ENCODE measurements at regions of chr15 and their contacts with region 1.

Region 1: GRCh38 chr15:52805351-52806283 is 15.5 kb upstream of the ONECUT1 start:
- DNase-seq: peak in 1 of 2 experiments; percentile 78
- H3K4me3 ChIP-seq: peak overlapping the region; percentile 20 to 69 (median 42)
- H3K27ac ChIP-seq: peak overlapping the region; percentile 70; the same call in 1 of the 2 replicates
- H3K4me1 ChIP-seq: peaks cover 11 to 30% (median 19%) of the 10 kb centered on the region in 4 experiments
- H3K27me3 ChIP-seq: peaks cover 10 to 39% (median 31%) of the 10 kb centered on the region in 4 experiments; a peak in 6 of 7 replicates
- CTCF ChIP-seq: peak in 2 of 3 experiments; percentile 27 to 70; a peak in 3 of 4 replicates
- EP300 ChIP-seq: no peak
- POLR2A ChIP-seq: peak in 1 of 2 experiments; percentile 51; a peak in 2 of 3 replicates
- RAD21 ChIP-seq: peak in 1 of 2 experiments; percentile 18; a peak in 2 of 4 replicates

Region 2: GRCh38 chr15:52709190-52709981 is 96.2 kb before region 1 on chr15:
- CTCF ChIA-PET with region 1: no interaction called
- POLR2A ChIA-PET with region 1: no interaction called
- DNase-seq: peak; percentile 49 to 84
- H3K4me3 ChIP-seq: peak overlapping the region; percentile 39 to 77 (median 52)
- H3K27ac ChIP-seq: no peak overlapping the region
- H3K4me1 ChIP-seq: peaks cover 0 to 8% (median 3%) of the 10 kb centered on the region in 4 experiments; a peak in 4 of 7 replicates
- H3K27me3 ChIP-seq: no peaks in the 10 kb centered on the region
- CTCF ChIP-seq: no peak
- EP300 ChIP-seq: no peak
- POLR2A ChIP-seq: no peak
- RAD21 ChIP-seq: no peak

Region 3: DNA sequence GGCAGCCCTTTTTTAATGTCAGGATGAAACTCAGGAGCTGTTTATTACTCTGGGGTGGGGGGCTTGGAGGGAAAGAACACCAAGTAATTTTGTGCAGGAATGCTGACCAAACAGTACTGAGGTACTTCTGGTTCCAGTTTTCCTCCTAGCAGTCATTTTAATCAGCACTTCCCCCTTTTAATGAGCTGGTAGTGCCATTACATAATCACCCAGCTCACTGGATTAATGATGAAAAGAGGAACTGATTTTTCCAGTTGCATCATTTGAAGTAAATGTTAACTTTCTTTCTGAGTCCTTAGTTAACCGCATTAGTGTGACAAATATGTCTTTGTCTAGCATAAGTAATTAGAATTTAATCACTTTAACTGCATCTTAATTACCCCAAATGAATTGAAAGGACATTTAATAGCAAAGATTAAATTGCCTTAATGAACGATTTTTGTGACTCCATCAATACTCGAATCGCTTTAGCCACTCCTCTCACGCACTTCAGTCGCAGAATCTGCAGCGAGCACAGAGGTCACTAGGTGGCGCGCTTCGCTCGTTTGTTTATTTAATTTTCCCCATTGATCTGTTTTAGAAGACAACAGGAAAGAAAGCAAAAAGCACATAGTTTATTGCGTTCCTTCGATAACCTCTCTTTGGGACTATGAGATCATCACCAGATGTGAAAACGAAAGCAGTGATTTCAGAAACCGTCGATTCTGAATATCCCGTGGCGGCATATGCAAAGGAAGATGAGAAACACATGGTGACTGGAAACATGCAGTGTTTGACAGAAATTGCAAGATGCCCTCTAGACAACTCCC is 25.2 kb before region 1 on chr15:
- CTCF ChIA-PET with region 1: interaction called, 182 read pairs
- POLR2A ChIA-PET with region 1: interaction called, 225 read pairs
- DNase-seq: peak in 1 of 2 experiments; percentile 88
- H3K4me3 ChIP-seq: no peak overlapping the region
- H3K27ac ChIP-seq: no peak overlapping the region
- H3K4me1 ChIP-seq: peaks cover 4 to 32% (median 8%) of the 10 kb centered on the region in 4 experiments; a peak in 6 of 7 replicates
- H3K27me3 ChIP-seq: peaks cover 14 to 36% (median 29%) of the 10 kb centered on the region in 4 experiments
- CTCF ChIP-seq: peak; percentile 73 to 88 (median 83)
- EP300 ChIP-seq: no peak
- POLR2A ChIP-seq: no peak
- RAD21 ChIP-seq: peak; percentile 85 to 90

Region 4: DNA sequence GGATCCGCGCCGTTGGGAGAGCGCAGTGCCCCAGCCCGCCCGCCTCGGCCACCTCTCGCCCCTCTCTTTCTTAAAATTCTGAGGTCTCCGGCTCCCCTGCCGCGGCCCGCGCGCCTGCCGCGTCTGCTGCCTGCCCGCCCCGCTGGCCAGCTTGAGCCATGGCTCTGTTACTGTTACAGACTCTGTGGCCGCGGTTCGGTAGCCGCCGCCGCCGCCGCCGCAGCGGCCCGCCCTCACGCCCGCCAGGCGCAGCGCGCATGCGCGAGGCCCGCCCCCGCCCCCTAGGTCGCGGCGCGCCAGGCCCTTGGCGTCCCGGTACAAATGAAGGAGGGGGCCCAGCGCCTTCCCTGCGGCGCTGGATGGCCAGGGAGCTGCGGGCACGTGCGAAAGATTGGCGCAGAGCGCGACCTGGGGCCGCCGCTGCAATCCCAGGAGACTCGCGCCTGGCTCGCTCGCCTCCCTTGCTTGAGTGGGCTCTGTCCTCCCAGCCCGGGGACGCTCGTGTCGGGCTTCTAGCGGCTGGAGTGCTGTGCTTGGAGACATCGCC is 15.4 kb before region 1 on chr15 and contains the start of gene ONECUT1:
- CTCF ChIA-PET with region 1: interaction called, 182 read pairs
- POLR2A ChIA-PET with region 1: interaction called, 225 read pairs
- DNase-seq: peak in 1 of 2 experiments; percentile 87
- H3K4me3 ChIP-seq: peak within 1 kb of the TSS; percentile 42 to 62 (median 46)
- H3K27ac ChIP-seq: no peak within 1 kb of the TSS
- H3K4me1 ChIP-seq: peaks cover 15 to 65% (median 52%) of the 10 kb centered on the region in 4 experiments
- H3K27me3 ChIP-seq: peaks cover 83 to 99% (median 96%) of the 10 kb centered on the region in 4 experiments
- CTCF ChIP-seq: no peak
- EP300 ChIP-seq: no peak
- POLR2A ChIP-seq: no peak
- RAD21 ChIP-seq: no peak
- total RNA-seq, gene ONECUT1: 6.1 and 6.4 TPM in 2 replicates

Region 5: GRCh38 chr15:52857937-52858781 is 52.5 kb after region 1 on chr15:
- CTCF ChIA-PET with region 1: interaction called, 11 read pairs
- POLR2A ChIA-PET with region 1: interaction called, 3 read pairs
- DNase-seq: no peak
- H3K4me3 ChIP-seq: peak overlapping the region in 1 of 4 experiments; percentile 5; a peak in 1 of 8 replicates
- H3K27ac ChIP-seq: no peak overlapping the region
- H3K4me1 ChIP-seq: peaks cover 0 to 16% (median 11%) of the 10 kb centered on the region in 4 experiments; a peak in 5 of 7 replicates
- H3K27me3 ChIP-seq: peaks cover 0 to 2% (median 0%) of the 10 kb centered on the region in 4 experiments; a peak in 1 of 7 replicates
- CTCF ChIP-seq: no peak
- EP300 ChIP-seq: no peak
- POLR2A ChIP-seq: no peak
- RAD21 ChIP-seq: no peak

Region 6: DNA sequence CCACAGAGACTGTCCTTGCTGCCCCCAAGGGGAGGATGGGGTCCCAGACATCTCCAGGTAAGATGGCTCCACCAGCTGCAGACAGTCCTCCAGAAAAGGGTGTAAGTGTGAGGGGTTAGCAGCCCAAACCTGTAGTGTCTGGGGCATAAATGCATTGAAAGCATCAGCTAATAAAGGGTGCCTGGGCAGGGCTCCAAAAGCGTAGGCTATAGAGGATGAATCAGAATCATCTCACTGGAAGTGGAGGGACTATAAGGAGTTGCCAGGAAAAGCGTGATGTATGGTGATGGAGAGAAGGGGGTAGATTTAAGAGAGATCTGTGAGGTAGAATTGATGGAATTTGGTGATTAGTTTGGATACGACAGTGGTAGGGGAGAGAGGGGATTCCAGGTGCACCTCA is 64.4 kb after region 1 on chr15:
- CTCF ChIA-PET with region 1: no interaction called
- POLR2A ChIA-PET with region 1: no interaction called
- DNase-seq: no peak
- H3K4me3 ChIP-seq: no peak overlapping the region
- H3K27ac ChIP-seq: no peak overlapping the region
- H3K4me1 ChIP-seq: no peaks in the 10 kb centered on the region; a peak in 1 of 7 replicates
- H3K27me3 ChIP-seq: peaks cover 0 to 2% (median 0%) of the 10 kb centered on the region in 4 experiments; a peak in 1 of 7 replicates
- CTCF ChIP-seq: no peak
- EP300 ChIP-seq: no peak
- POLR2A ChIP-seq: no peak
- RAD21 ChIP-seq: no peak

Measured in H1 (cell line).